ENCODE measurements at regions of chr1 and their contacts with region 1.

Region 1: DNA sequence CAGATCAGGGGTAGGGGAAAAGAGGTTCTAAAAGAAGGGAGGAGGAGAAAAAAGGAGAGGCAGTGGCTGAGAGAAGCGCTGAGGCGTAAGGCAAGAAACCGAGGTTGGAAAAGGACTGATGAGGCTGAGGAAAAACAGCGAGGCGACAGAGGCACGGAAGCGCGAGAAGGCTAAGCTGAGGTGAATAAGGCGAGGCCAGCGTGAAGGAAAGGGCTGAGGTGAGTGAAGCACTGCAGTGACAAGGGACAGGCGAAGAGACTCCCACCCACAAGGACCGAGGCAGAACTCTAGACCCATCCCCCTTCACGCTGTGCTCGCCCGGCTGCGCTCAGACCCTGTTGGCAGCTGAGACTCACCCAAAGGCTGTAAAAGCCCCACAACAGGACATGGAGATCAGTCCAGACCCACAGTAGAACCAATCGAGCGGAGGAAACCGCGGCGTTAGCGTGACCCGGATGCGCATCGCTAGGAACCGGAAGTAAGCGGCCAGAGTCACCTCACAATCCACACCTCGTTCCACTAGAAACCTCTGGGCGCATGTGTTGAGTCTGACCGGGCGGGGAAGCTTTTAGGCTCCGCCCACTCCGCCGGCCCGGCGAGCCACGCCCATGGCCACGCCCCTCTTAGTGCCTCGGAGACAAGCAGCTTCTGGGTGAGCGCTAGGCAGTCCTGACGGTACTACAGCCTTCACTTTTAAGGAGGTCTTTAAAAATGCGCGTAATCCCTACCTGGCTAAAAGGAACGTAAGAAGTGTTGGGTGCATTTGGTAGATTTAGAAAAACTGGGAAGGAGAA is at the start of gene EYA3:
- DNase-seq: peak; percentile 97
- ATAC-seq: peak; percentile 97
- H3K4me3 ChIP-seq: peak within 1 kb of the TSS; percentile 79 to 98 (median 82)
- H3K27ac ChIP-seq: peak within 1 kb of the TSS; percentile 87
- H3K4me1 ChIP-seq: peaks cover 47% of the 10 kb centered on the region
- H3K27me3 ChIP-seq: no peaks in the 10 kb centered on the region; a peak in 1 of 5 replicates
- CTCF ChIP-seq: peak; percentile 13; the same call in 1 of the 2 replicates
- EP300 ChIP-seq: no peak
- POLR2A ChIP-seq: peak; percentile 90
- RAD21 ChIP-seq: peak; percentile 45
- total RNA-seq, gene EYA3: 19.7 and 26.3 TPM in 2 replicates

Region 2: GRCh38 chr1:28036431-28036830 is 51.9 kb before region 1 on chr1:
- CTCF ChIA-PET with region 1: no interaction called
- POLR2A ChIA-PET with region 1: no interaction called
- in situ Hi-C with region 1: no loop called
- intact Hi-C with region 1: no loop called
- DNase-seq: no peak
- ATAC-seq: no peak
- H3K4me3 ChIP-seq: no peak overlapping the region
- H3K27ac ChIP-seq: no peak overlapping the region
- H3K4me1 ChIP-seq: no peaks in the 10 kb centered on the region
- H3K27me3 ChIP-seq: no peaks in the 10 kb centered on the region
- CTCF ChIP-seq: peak; percentile 20; the same call in 1 of the 2 replicates
- EP300 ChIP-seq: no peak
- POLR2A ChIP-seq: no peak
- RAD21 ChIP-seq: no peak

Region 3: DNA sequence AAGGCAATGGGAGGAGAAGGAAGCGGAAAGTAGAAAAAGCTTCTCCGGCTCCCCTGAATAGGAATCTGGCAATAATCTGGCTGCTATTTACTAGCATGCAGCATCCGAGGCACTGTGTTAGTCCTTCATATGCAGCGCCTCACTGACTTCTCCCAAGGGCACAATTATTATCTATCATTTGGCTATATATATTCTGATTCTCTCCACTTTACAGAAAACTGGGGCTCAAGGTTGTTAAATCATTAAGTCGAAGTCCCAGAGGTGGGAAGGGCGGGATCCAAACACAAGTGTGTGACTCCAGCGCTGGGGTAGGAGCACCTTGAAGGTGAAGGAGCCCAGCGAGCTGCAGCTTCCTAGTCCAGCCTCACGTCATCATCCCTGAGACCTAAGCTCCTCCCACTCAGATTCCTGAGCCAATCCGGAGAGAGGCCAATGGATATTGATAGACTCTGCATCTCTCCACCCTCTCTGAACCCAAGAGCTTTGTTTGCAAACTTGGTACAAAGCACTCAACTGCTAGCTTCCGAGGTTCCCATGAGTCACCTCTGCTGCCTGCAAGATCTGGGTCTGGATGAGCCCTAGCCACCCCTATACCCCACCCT is 16.6 kb after region 1 on chr1:
- CTCF ChIA-PET with region 1: no interaction called
- POLR2A ChIA-PET with region 1: interaction called, 14 read pairs
- in situ Hi-C with region 1: no loop called
- intact Hi-C with region 1: no loop called
- DNase-seq: peak; percentile 77
- ATAC-seq: peak; percentile 96
- H3K4me3 ChIP-seq: peak overlapping the region; percentile 45 to 61 (median 50)
- H3K27ac ChIP-seq: no peak overlapping the region
- H3K4me1 ChIP-seq: peaks cover 20% of the 10 kb centered on the region
- H3K27me3 ChIP-seq: no peaks in the 10 kb centered on the region
- CTCF ChIP-seq: no peak
- EP300 ChIP-seq: no peak
- POLR2A ChIP-seq: peak in 1 of 2 experiments; percentile 71; a peak in 2 of 4 replicates
- RAD21 ChIP-seq: no peak

Region 4: GRCh38 chr1:28112388-28113241 is 24.2 kb after region 1 on chr1:
- CTCF ChIA-PET with region 1: interaction called, 17 read pairs
- POLR2A ChIA-PET with region 1: interaction called, 6 read pairs
- in situ Hi-C with region 1: no loop called
- intact Hi-C with region 1: loop called (anchors 1 kb)
- DNase-seq: peak; percentile 46
- ATAC-seq: peak; percentile 35
- H3K4me3 ChIP-seq: no peak overlapping the region
- H3K27ac ChIP-seq: no peak overlapping the region
- H3K4me1 ChIP-seq: peaks cover 13% of the 10 kb centered on the region
- H3K27me3 ChIP-seq: no peaks in the 10 kb centered on the region
- CTCF ChIP-seq: peak; percentile 71
- EP300 ChIP-seq: no peak
- POLR2A ChIP-seq: no peak
- RAD21 ChIP-seq: 0 out of 2 replicates have a peak, but pooled peaks have one; percentile 36

Region 5: DNA sequence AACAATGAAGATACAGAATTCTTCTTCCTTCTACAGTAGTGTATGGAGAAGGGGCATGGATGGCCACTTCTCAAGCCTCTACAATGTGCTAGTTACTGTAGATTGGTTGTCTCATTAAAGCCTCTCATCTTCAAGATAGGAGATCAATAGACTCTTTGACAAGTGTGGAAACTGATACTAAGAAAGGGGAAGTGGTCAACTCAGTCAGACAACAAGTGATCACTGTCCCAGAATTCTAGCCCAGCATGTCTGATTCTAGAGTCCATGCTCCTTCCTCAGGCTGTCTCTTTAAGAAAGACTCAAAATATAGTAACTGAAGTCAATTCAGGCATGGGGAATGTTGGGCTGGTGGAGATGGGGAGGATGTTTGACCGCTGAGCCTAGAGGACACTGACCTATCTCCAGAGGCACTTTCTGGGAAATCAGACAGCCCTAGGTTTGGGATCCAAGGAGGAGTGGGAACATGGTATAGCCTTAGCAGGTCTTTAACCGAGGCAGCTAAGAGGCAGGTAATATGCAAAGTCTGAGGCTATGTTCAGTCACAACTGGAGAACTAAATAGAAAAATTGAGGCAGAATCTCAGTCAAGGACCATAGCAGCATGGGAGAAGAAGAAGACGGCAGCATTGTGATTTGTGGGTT is 39.4 kb after region 1 on chr1:
- CTCF ChIA-PET with region 1: no interaction called
- POLR2A ChIA-PET with region 1: no interaction called
- in situ Hi-C with region 1: no loop called
- intact Hi-C with region 1: no loop called
- DNase-seq: no peak
- ATAC-seq: no peak
- H3K4me3 ChIP-seq: no peak overlapping the region
- H3K27ac ChIP-seq: no peak overlapping the region
- H3K4me1 ChIP-seq: peaks cover 12% of the 10 kb centered on the region
- H3K27me3 ChIP-seq: peaks cover 3 to 17% of the 10 kb centered on the region in 2 experiments; a peak in 4 of 5 replicates
- CTCF ChIP-seq: no peak
- EP300 ChIP-seq: no peak
- POLR2A ChIP-seq: no peak
- RAD21 ChIP-seq: no peak

Region 6: DNA sequence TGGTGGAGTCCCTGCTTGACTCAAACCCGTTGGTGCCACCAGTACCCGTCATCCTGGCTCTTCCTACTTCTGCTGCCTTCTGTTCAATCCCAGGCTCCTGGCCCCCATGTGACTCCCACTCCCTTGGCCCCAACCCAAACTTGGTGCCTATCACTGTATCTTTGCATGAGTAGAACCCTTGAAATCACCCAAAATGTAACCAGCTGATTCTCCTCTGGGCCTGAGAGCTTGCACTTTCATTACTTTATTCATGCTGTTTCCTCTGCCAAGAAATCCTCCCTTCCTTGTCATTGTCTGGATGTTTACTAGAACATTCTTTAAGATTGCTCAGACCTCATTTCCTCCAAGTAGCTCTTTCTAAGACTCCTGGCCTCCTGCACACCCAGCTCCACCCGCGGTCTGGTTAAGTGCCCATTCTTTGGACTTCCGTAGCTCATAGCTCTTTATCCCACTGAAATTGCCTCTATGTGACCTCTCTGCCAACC is 72.5 kb after region 1 on chr1:
- CTCF ChIA-PET with region 1: no interaction called
- POLR2A ChIA-PET with region 1: no interaction called
- in situ Hi-C with region 1: no loop called
- intact Hi-C with region 1: loop called (anchors 10 kb)
- DNase-seq: no peak
- ATAC-seq: no peak
- H3K4me3 ChIP-seq: no peak overlapping the region
- H3K27ac ChIP-seq: no peak overlapping the region
- H3K4me1 ChIP-seq: peaks cover 12% of the 10 kb centered on the region
- H3K27me3 ChIP-seq: 0 out of 5 replicates have a peak, but pooled peaks cover 0 to 3% of the 10 kb centered on the region in 2 experiments
- CTCF ChIP-seq: no peak
- EP300 ChIP-seq: no peak
- POLR2A ChIP-seq: no peak
- RAD21 ChIP-seq: no peak

Region 7: DNA sequence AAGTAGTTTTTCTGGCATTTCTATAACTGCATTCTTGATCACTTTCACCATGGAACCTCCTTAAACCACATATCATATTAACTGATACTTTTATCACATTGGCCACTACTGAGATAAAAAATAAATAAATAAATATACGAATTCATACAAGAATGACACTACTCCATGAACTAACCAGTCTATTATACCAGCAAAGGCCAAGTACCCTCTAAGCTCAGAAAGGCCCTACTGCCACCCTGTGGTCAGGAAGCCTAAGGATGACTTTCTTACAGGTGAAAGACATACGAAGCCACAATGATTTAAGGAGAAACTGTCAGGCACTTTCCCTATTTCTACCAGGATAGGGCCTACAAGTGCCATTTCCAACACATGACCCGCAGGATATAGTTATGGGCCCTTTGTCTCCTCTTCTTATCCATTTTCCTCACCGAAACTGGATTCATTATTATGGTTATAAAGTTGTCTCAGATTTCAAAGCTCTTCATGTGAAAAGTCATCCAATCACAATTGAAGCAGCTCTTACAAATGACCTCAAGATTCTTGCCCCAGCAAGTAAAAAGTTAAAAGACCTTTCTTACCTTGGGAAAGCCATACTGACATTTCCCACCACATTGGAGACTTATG is 120.6 kb after region 1 on chr1:
- CTCF ChIA-PET with region 1: interaction called, 34 read pairs
- POLR2A ChIA-PET with region 1: interaction called, 4 read pairs
- in situ Hi-C with region 1: loop called (anchors 5 kb)
- intact Hi-C with region 1: loop called (anchors 2 kb)
- DNase-seq: peak; percentile 58
- ATAC-seq: peak; percentile 72
- H3K4me3 ChIP-seq: no peak overlapping the region
- H3K27ac ChIP-seq: no peak overlapping the region
- H3K4me1 ChIP-seq: peaks cover 17% of the 10 kb centered on the region
- H3K27me3 ChIP-seq: no peaks in the 10 kb centered on the region
- CTCF ChIP-seq: peak; percentile 79
- EP300 ChIP-seq: no peak
- POLR2A ChIP-seq: no peak
- RAD21 ChIP-seq: peak; percentile 51; the same call in 1 of the 2 replicates

Region 8: GRCh38 chr1:28369371-28370238 is 281.2 kb after region 1 on chr1 and contains the start of gene PHACTR4:
- CTCF ChIA-PET with region 1: no interaction called
- POLR2A ChIA-PET with region 1: interaction called, 3 read pairs
- in situ Hi-C with region 1: loop called (anchors 25 kb)
- intact Hi-C with region 1: loop called (anchors 2 kb)
- DNase-seq: peak; percentile 92
- ATAC-seq: peak; percentile 96
- H3K4me3 ChIP-seq: peak within 1 kb of the TSS; percentile 70 to 86 (median 86)
- H3K27ac ChIP-seq: peak within 1 kb of the TSS; percentile 99
- H3K4me1 ChIP-seq: peaks cover 51% of the 10 kb centered on the region
- H3K27me3 ChIP-seq: no peaks in the 10 kb centered on the region
- CTCF ChIP-seq: no peak; the same call in none of the 2 replicates
- EP300 ChIP-seq: no peak; a peak in 1 of 4 replicates
- POLR2A ChIP-seq: peak; percentile 72 to 93
- RAD21 ChIP-seq: peak; percentile 47; the same call in 1 of the 2 replicates
- total RNA-seq, gene PHACTR4: 17.1 and 29.6 TPM in 2 replicates